Activated T-helper 2 cell treated with anti-CD3 and anti-CD28 coated beads, Interferon-gamma antibody, Interleukin-2, Interleukin-4, amounts not matched to agents 10 μg/mL and 5 μg/mL and 100 μg/mL, durations not matched to agents 14 hours and 24 hours and 36 hours (primary cell): ENCODE measurements at regions of chr4 and their contacts with region 1.

Region 1: GRCh38 chr4:83455281-83456129 is at the starts of genes HELQ and MRPS18C:
- DNase-seq: peak; percentile 95
- H3K4me3 Mint-ChIP-seq: peak within 1 kb of the TSS; percentile 97
- H3K27ac Mint-ChIP-seq: peak within 1 kb of the TSS; percentile 98
- H3K4me1 Mint-ChIP-seq: peaks cover 34% of the 10 kb centered on the region
- H3K27me3 Mint-ChIP-seq: no peaks in the 10 kb centered on the region
- total RNA-seq, gene HELQ: 11.0 and 11.9 TPM in 2 replicates
- total RNA-seq, gene MRPS18C: 72.2 and 73.8 TPM in 2 replicates

Region 2: GRCh38 chr4:82430193-82430963 is 1025.1 kb before region 1 on chr4 and contains the starts of genes ENOPH1 and HNRNPDL:
- intact Hi-C with region 1: loop called (anchors 1 kb)
- DNase-seq: peak; percentile 96
- H3K4me3 Mint-ChIP-seq: peak within 1 kb of the TSS; percentile 98
- H3K27ac Mint-ChIP-seq: peak within 1 kb of the TSS; percentile 99
- H3K4me1 Mint-ChIP-seq: peaks cover 44% of the 10 kb centered on the region
- H3K27me3 Mint-ChIP-seq: no peaks in the 10 kb centered on the region
- total RNA-seq, gene ENOPH1: 64.5 and 65.9 TPM in 2 replicates
- total RNA-seq, gene HNRNPDL: 470 and 486 TPM in 2 replicates

Region 3: GRCh38 chr4:83034630-83035494 is 420.6 kb before region 1 on chr4 and contains the start of gene COPS4:
- intact Hi-C with region 1: loop called (anchors 1 kb)
- DNase-seq: peak; percentile 96
- H3K4me3 Mint-ChIP-seq: peak within 1 kb of the TSS; percentile 98
- H3K27ac Mint-ChIP-seq: peak within 1 kb of the TSS; percentile 100
- H3K4me1 Mint-ChIP-seq: peaks cover 18% of the 10 kb centered on the region
- H3K27me3 Mint-ChIP-seq: peaks cover 4% of the 10 kb centered on the region
- total RNA-seq, gene COPS4: 33.7 and 35.2 TPM in 2 replicates

Region 4: GRCh38 chr4:83284193-83285054 is 171.1 kb before region 1 on chr4 and contains the start of gene COQ2:
- intact Hi-C with region 1: loop called (anchors 1 kb)
- DNase-seq: peak; percentile 91
- H3K4me3 Mint-ChIP-seq: peak within 1 kb of the TSS; percentile 90
- H3K27ac Mint-ChIP-seq: peak within 1 kb of the TSS; percentile 95
- H3K4me1 Mint-ChIP-seq: peaks cover 45% of the 10 kb centered on the region
- H3K27me3 Mint-ChIP-seq: peaks cover 2% of the 10 kb centered on the region
- total RNA-seq, gene COQ2: 19.5 and 20.6 TPM in 2 replicates

Region 5: GRCh38 chr4:83484500-83485461 is 29.3 kb after region 1 on chr4 and contains the start of gene ABRAXAS1:
- intact Hi-C with region 1: loop called (anchors 1 kb)
- DNase-seq: peak; percentile 93
- H3K4me3 Mint-ChIP-seq: peak within 1 kb of the TSS; percentile 95
- H3K27ac Mint-ChIP-seq: peak within 1 kb of the TSS; percentile 96
- H3K4me1 Mint-ChIP-seq: peaks cover 14% of the 10 kb centered on the region
- H3K27me3 Mint-ChIP-seq: no peaks in the 10 kb centered on the region
- total RNA-seq, gene ABRAXAS1: 15.7 and 16.0 TPM in 2 replicates

Region 6: DNA sequence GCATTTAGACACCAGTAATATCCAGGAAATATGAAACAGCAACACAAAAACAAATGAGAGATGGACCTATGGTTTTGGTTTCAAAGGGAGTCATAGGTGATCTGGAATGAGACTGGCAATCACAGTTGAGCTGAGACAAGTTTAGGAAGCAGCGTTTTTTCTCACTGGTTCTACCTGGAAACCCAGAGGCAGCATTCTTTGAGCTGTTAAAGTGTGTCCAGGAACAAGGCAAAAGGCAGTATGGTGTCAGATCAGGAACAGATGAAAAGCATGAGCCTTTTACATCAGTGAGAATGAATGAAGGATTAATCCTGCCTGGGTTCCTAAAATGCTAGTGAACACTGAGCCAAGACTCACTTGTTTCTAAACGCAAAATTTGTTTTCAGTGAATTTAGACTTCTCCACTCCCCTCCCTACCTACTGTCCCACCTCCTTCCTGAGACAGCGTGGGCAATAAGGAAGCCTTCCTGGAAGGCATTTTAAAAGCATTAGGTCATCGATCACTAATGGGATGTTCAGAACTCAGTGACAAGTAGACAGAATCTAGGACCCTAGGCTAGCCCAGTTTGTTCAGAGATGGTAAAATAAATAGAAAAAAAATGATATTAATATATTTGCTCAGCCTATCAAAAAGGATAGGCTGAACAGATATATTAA is 411.2 kb after region 1 on chr4:
- intact Hi-C with region 1: no loop called
- DNase-seq: no peak
- H3K4me3 Mint-ChIP-seq: no peak overlapping the region
- H3K27ac Mint-ChIP-seq: no peak overlapping the region
- H3K4me1 Mint-ChIP-seq: no peaks in the 10 kb centered on the region
- H3K27me3 Mint-ChIP-seq: no peaks in the 10 kb centered on the region